ENCODE measurements at regions of chr1 and their contacts with region 1.

Region 1: DNA sequence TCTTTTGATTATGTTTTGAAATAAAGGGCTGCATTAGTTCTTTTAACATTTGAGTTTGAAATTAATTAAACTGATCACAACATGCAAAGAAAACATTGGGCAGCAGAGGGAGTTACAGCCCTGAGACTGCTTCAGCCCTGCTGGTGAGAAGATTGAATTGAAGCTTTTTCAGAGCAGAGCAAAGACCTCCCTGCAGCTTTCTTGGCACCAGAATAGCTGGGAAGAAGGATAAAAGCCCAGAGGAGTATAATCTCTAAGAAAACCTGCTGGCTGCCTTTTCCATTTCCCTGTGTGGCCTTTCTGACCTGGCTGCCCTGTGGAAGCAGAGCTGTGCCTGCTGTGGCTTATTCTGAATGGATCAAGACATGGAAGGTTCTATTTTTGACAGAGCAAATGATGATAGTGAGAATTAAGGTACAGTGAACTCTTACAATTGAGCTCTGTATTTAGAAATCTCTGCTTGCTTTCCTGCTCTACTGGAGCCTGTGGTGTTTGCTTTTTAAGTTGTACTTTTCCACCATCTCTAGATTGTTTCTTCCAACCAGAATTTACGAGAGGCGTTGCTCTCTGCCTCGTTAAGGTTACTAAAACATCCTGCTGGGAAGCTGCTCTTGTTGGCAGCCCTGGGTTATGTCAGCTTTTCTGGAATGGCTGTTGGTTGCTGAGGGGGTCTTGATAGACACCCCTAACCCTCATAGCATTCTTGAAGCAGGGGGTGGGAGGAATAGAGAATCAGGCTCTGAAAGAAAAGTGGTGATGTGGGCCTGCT is 9.9 kb downstream of the SNRPE start:
- DNase-seq: peak; percentile 69 to 84 (median 82)
- H3K4me3 ChIP-seq: no peak overlapping the region
- H3K27ac ChIP-seq: no peak overlapping the region
- H3K4me1 ChIP-seq: no peaks in the 10 kb centered on the region
- H3K27me3 ChIP-seq: no peaks in the 10 kb centered on the region

Region 2: GRCh38 chr1:204136814-204137213 is 265.5 kb after region 1 on chr1:
- CTCF ChIA-PET with region 1: interaction called, 322 read pairs
- POLR2A ChIA-PET with region 1: no interaction called
- DNase-seq: no peak
- H3K4me3 ChIP-seq: no peak overlapping the region
- H3K27ac ChIP-seq: no peak overlapping the region
- H3K4me1 ChIP-seq: no peaks in the 10 kb centered on the region
- H3K27me3 ChIP-seq: no peaks in the 10 kb centered on the region

Measured in common myeloid progenitor, CD34-positive (primary cell).